ENCODE measurements at regions of chr7 and their contacts with region 1.

Region 1: DNA sequence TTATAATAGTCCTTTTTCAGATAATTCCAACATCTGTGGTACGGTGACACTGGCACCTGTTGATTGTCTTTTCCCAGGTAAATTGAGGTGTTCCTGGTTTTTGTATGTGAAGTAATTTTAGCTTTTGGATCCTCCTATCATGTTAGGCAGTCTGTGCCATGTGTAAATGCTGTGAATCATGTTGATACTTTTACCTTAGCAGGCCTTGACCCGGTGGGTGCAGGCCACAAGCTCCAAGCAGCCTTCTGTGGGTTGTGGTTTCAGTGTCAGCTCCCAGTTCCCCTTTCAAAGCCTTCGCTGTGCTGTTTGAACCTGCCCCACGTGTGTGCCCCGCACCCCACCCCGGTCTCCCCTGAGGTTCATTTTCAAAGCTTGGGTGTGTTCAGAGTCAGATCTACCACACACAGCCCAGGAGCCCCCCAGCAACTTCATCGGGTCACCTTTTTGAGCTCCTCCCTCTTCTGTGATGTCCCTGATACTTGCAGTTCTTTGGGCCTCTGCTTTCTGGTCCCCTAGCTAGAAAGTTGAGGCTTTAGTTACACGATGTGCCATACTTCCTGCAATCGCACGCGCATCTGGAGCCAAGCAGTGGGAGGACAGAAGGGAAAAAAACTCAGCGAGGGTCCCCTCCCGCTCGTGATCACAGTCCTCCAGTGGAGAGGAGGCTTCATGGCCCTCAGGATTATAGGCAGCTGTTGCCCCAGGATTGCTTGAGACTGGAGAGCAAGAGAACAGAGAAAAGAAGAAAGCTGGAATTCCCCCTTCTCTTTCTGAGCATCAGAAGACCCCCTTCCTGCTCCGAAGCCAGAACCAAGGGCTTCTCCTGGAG is 8.7 kb upstream of the BHLHA15 start:
- DNase-seq: peak; percentile 81
- H3K4me3 Mint-ChIP-seq: peak overlapping the region; percentile 61
- H3K27ac Mint-ChIP-seq: peak overlapping the region; percentile 71
- H3K4me1 Mint-ChIP-seq: peaks cover 60% of the 10 kb centered on the region
- H3K27me3 Mint-ChIP-seq: no peaks in the 10 kb centered on the region

Region 2: GRCh38 chr7:97851683-97852082 is 350.9 kb before region 1 on chr7:
- CTCF ChIA-PET with region 1: no interaction called
- intact Hi-C with region 1: no loop called
- DNase-seq: no peak
- H3K4me3 Mint-ChIP-seq: no peak overlapping the region
- H3K27ac Mint-ChIP-seq: no peak overlapping the region
- H3K4me1 Mint-ChIP-seq: no peaks in the 10 kb centered on the region
- H3K27me3 Mint-ChIP-seq: no peaks in the 10 kb centered on the region

Region 3: DNA sequence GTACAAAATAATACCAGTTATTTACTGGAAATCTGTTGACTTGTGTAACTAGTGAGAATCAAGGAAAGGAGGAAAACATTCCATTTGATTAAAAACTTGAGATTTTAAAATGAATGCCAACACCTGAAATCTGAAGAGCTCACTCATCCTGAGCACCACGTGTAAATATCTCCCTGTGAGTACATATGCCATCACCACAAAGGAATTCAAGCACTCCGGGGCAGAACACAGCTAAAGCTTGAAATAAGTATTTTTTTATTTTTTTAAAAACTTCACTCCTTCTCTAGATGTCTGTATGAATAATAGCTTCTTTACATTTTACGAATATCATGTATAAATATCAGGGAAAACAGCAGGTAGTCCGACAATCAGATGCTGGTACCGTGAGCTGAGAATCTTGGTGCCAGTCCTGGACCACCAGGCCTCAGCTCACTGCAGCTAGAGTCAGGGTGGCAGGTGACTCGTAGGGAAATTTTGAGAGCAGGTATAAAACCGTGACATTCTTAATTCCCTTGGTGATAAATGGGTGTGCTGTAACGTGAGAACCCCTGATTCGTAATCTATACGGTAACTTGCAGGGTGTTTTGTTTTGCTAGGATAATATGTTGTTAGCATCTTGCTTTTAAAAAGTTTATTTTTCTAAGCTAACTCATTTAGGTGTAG is 83.2 kb before region 1 on chr7:
- CTCF ChIA-PET with region 1: no interaction called
- intact Hi-C with region 1: no loop called
- DNase-seq: no peak
- H3K4me3 Mint-ChIP-seq: no peak overlapping the region
- H3K27ac Mint-ChIP-seq: no peak overlapping the region
- H3K4me1 Mint-ChIP-seq: peaks cover 12% of the 10 kb centered on the region
- H3K27me3 Mint-ChIP-seq: no peaks in the 10 kb centered on the region

Region 4: DNA sequence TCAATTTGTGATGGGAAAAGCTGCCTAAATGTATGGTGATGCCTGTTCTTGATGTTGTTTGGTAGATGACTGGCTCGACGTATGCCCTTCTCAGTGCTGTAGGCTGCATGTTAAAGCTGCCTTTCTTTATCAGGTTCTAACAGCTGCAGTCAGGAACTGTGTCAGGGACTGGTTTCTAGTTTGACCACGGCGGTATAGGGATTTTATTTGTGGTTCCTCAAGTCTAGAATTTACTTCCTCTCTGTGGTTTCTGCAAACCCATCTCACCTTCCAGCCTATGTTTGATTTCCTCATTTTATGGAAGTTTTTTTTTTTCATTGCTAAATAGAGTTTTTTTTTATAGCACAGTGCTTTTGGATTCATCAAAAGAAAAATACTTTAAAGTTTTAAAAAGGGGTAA is 69.4 kb before region 1 on chr7:
- CTCF ChIA-PET with region 1: no interaction called
- intact Hi-C with region 1: loop called (anchors 1 kb)
- DNase-seq: peak; percentile 41
- H3K4me3 Mint-ChIP-seq: no peak overlapping the region
- H3K27ac Mint-ChIP-seq: no peak overlapping the region
- H3K4me1 Mint-ChIP-seq: peaks cover 48% of the 10 kb centered on the region
- H3K27me3 Mint-ChIP-seq: no peaks in the 10 kb centered on the region

Region 5: DNA sequence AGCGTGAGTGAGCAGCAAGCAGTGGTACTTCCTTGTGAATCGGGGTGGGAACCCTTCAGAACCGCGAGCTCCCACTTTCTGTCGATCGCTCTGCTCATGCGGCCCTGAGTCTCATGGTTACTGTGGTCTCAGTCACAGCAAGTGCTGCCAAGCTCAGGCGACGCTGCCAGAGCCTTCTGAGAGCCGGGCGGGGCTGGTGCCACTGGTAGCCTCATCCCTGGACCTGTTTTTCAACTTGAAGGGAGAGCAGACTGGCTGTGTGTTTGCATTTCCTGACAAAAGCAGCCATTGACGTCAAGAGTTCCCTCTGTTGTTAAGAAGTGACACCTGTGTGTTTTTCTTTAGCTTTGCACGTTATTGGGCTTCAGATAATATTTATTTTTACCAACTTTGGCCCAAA is 24.2 kb before region 1 on chr7:
- CTCF ChIA-PET with region 1: no interaction called
- intact Hi-C with region 1: loop called (anchors 1 kb)
- DNase-seq: no peak
- H3K4me3 Mint-ChIP-seq: no peak overlapping the region
- H3K27ac Mint-ChIP-seq: no peak overlapping the region
- H3K4me1 Mint-ChIP-seq: no peaks in the 10 kb centered on the region
- H3K27me3 Mint-ChIP-seq: no peaks in the 10 kb centered on the region

Region 6: DNA sequence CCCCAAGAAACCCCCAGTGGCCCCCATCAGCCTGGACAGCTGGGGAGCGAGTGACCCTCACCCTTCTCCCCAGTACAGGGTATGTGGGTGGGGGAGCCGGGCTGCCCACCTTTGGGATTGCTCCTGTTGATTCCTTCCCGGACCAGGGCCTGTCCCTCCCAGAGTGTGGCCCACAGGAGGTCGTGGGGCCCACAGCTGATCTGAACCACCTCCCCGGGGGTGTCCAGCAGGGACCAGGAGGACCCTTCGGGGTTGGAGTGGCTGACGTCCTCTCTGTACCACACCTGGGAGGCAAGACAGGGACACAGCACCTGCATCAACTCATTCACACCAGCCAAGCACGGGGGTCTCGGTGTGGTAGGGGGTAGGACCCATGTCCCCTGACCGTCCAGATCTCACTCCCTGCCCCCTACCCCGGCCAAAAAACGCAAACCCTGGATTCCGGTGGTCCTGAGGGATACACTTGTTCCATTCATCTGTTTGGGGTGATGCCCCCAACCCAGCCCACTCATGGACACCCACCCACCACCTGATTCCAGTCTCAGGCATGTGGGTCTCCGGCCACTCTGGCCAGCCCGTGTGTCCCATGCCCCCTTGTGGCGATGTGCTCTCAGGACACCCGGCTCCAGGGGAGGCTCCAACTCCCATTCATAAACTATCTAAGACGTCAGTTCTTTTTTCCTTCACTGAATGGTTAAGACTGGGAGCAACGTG is 38.5 kb after region 1 on chr7:
- CTCF ChIA-PET with region 1: no interaction called
- intact Hi-C with region 1: loop called (anchors 2 kb)
- DNase-seq: peak; percentile 24
- H3K4me3 Mint-ChIP-seq: no peak overlapping the region
- H3K27ac Mint-ChIP-seq: peak overlapping the region; percentile 36
- H3K4me1 Mint-ChIP-seq: peaks cover 2% of the 10 kb centered on the region
- H3K27me3 Mint-ChIP-seq: no peaks in the 10 kb centered on the region

Region 7: DNA sequence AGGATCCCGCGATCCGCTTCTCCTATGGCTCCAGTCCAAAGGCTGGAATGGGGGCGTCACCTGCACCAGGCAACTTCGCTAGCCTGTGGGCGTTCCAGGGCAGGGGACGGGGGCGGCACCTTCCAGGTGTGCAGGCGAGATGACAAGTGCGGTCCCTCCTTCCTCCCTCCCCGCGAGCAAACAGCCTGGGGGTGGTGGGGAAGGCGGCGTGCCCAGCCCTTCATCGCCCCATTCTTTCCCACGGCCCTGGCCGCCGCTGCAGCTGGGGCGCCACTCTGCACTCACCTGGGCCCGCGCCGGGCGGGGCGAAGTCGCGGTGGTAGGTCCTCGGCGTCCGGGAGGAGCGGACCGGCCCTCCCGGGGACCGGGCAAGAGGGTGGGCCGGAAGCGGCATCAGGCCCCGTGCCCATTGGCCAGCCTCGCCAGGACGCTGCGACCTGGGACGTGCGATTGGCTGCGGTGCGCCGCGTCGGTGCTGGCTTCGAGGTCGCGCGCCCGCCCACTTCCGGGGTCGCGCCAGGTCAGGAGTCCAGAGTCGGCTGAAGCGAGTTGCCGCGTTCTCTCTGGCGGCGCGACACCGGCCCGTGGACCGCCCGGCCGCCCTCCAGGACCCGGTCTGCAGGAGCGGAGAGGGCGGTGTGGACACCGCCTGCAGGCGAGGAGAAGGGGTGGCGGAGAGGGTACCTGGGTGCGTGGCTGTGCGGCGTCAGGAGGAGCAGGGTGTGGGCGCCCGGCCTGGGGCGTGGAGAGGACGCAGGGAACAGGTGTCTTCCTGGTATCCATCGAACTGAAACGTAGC is 49.5 kb after region 1 on chr7 and contains the start of gene TECPR1:
- CTCF ChIA-PET with region 1: interaction called, 3 read pairs
- intact Hi-C with region 1: loop called (anchors 1 kb)
- DNase-seq: peak; percentile 90
- H3K4me3 Mint-ChIP-seq: peak within 1 kb of the TSS; percentile 93
- H3K27ac Mint-ChIP-seq: peak within 1 kb of the TSS; percentile 94
- H3K4me1 Mint-ChIP-seq: peaks cover 53% of the 10 kb centered on the region
- H3K27me3 Mint-ChIP-seq: no peaks in the 10 kb centered on the region
- total RNA-seq, gene TECPR1: 29.8 to 36.7 TPM

Region 8: DNA sequence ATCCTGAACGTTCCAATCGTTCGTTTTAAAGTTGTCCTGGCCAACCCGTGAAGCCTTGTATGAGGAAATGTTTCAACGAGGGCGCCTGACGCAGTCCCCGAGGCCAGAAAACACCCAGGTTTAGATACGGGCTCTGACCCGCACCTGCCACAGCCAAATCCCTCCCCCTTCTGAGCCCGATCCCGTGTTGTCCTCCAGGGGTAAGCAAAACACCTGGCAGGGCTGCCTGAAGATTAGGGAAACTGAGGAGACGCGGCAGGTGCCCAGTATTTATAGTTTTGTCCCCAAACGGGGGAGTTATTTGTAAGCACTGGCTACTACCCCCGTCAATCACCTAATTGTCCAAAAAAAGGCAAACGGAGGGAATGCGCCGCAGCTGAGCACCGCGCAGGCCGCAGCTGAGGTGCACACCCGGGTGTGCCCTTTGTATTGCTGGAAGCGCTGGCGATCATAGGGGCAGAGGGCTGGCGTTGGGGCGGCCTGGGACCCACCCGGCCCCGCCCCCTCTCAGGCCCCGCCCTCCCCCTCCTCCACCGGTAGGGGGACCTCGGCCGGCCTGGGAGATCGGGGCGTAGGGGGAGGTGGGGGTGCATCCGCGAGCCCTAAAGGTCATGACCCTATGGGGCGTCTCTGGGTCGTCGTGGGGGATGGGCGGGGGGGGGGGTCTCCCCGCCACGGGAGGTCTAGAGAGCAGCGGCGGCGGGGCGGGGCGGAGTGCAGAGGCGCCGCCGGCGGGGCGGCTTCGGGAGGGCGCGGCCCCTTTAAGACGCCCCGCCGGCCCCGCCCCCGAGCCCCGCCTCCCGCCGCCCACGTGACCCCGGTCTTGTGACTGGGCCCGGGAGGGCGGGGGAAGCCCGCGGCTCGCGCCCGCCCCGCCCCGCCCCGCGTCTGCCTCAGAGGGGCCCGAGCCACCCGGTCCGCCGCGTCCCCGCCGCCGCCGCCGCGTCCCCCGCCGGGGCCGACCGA is 78.5 kb after region 1 on chr7 and contains the start of gene BRI3:
- CTCF ChIA-PET with region 1: no interaction called
- intact Hi-C with region 1: loop called (anchors 2 kb)
- DNase-seq: peak; percentile 91
- H3K4me3 Mint-ChIP-seq: peak within 1 kb of the TSS; percentile 77
- H3K27ac Mint-ChIP-seq: peak within 1 kb of the TSS; percentile 41
- H3K4me1 Mint-ChIP-seq: peaks cover 29% of the 10 kb centered on the region
- H3K27me3 Mint-ChIP-seq: no peaks in the 10 kb centered on the region
- total RNA-seq, gene BRI3: 51.6 to 54.4 TPM

Region 9: GRCh38 chr7:99579956-99580777 is 1377.6 kb after region 1 on chr7:
- CTCF ChIA-PET with region 1: no interaction called
- intact Hi-C with region 1: no loop called
- DNase-seq: peak; percentile 69
- H3K4me3 Mint-ChIP-seq: peak overlapping the region; percentile 83
- H3K27ac Mint-ChIP-seq: peak overlapping the region; percentile 51
- H3K4me1 Mint-ChIP-seq: peaks cover 5% of the 10 kb centered on the region
- H3K27me3 Mint-ChIP-seq: no peaks in the 10 kb centered on the region